Activated CD8-positive, alpha-beta T cell treated with anti-CD3 and anti-CD28 coated beads, Interleukin-2, amount 10 ng/mL, durations not matched to agents 7 days and 5 days (primary cell): ENCODE measurements at regions of chr11 and their contacts with region 1.

Region 1: GRCh38 chr11:75565221-75565814 is 3.3 kb downstream of the SERPINH1 start:
- DNase-seq: no peak
- ATAC-seq: no peak
- H3K4me3 Mint-ChIP-seq: no peak overlapping the region
- H3K27ac Mint-ChIP-seq: peak overlapping the region; percentile 80
- H3K4me1 Mint-ChIP-seq: peaks cover 62% of the 10 kb centered on the region
- H3K27me3 Mint-ChIP-seq: no peaks in the 10 kb centered on the region

Region 2: DNA sequence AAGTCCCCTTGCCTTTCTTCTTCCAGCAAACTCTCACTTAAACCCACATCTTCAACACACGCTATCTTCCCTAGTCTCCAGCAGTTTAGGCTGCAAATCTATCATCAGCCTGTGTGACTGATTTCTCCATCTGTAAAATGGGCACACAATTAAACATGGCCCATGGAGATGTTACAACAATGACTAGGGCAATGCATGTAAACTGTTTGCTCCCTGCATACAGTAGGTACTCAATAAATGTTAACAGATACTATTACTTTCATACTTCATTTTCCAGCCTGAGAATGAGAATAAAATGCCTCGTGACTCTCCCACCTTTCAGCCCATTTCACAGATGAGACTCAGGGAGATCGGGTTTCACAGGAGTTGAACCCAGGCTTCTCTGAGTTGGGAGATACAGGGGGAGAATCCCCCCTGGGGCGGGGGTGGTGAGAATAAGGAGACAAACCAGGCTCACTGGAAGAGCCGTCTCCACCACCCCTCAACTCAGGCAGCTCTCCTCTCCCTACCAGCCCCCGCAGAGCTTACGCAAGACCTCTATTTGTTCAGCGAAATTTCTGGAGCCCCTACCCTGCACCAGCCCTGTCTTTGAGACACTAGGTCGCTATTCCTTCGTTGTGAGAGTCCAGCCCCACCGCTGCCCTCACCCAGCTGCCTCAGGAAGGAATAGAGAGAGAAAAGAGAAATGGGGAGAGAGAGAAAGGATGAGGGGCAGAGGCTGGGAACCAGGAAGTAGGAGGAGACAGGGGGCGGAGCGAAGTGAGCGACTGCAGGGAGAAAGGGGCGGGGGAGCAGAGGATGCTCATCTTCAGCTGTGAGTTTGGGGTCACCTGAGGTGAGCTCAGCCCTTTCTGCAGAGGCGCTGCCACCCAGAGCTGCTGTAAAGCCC is 90.2 kb before region 1 on chr11:
- CTCF ChIA-PET with region 1: no interaction called
- POLR2A ChIA-PET with region 1: no interaction called
- DNase-seq: peak; percentile 94
- ATAC-seq: peak; percentile 90
- H3K4me3 Mint-ChIP-seq: peak overlapping the region; percentile 70
- H3K27ac Mint-ChIP-seq: peak overlapping the region; percentile 98
- H3K4me1 Mint-ChIP-seq: peaks cover 35% of the 10 kb centered on the region
- H3K27me3 Mint-ChIP-seq: no peaks in the 10 kb centered on the region

Region 3: DNA sequence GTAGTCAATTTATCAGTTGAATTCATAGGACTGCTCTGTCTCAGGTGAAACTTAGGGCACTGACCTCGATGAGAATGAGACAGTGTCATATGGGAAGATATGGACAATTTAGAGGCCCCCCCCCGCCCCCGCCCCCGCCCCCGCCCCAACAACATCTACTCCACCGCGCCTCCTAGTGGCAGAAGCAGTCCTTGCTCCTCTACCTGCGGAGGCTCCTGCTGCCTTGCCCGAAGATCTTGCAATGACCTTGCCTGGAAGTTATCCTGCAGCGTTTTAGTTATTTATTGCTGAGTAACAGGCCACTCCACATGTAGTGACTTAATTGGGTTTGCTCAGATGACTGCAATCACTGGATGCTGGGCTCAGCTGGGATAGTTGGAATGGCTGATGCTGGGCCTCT is 11.9 kb after region 1 on chr11:
- CTCF ChIA-PET with region 1: interaction called, 18 read pairs
- POLR2A ChIA-PET with region 1: interaction called, 6 read pairs
- DNase-seq: peak; percentile 60
- ATAC-seq: no peak
- H3K4me3 Mint-ChIP-seq: no peak overlapping the region
- H3K27ac Mint-ChIP-seq: no peak overlapping the region
- H3K4me1 Mint-ChIP-seq: peaks cover 23% of the 10 kb centered on the region
- H3K27me3 Mint-ChIP-seq: no peaks in the 10 kb centered on the region